PC-9 (cell line): ENCODE measurements at regions of chr1 and their contacts with region 1.

Region 1: GRCh38 chr1:30801771-30802198 is 44.2 kb upstream of the LAPTM5 start:
- DNase-seq: peak in 1 of 2 experiments; percentile 79
- H3K4me3 ChIP-seq: no peak overlapping the region
- H3K27ac ChIP-seq: no peak overlapping the region
- H3K4me1 ChIP-seq: peaks cover 25% of the 10 kb centered on the region
- H3K27me3 ChIP-seq: peaks cover 6% of the 10 kb centered on the region; the same call in 1 of the 2 replicates
- CTCF ChIP-seq: peak; percentile 88

Region 2: GRCh38 chr1:30911046-30911954 is 109.5 kb after region 1 on chr1:
- CTCF ChIA-PET with region 1: interaction called, 31 read pairs
- POLR2A ChIA-PET with region 1: interaction called, 9 read pairs
- intact Hi-C with region 1: loop called (anchors 1 kb)
- DNase-seq: peak; percentile 41 to 74
- H3K4me3 ChIP-seq: no peak overlapping the region
- H3K27ac ChIP-seq: no peak overlapping the region
- H3K4me1 ChIP-seq: peaks cover 17% of the 10 kb centered on the region
- H3K27me3 ChIP-seq: no peaks in the 10 kb centered on the region
- CTCF ChIP-seq: peak; percentile 82

Region 3: DNA sequence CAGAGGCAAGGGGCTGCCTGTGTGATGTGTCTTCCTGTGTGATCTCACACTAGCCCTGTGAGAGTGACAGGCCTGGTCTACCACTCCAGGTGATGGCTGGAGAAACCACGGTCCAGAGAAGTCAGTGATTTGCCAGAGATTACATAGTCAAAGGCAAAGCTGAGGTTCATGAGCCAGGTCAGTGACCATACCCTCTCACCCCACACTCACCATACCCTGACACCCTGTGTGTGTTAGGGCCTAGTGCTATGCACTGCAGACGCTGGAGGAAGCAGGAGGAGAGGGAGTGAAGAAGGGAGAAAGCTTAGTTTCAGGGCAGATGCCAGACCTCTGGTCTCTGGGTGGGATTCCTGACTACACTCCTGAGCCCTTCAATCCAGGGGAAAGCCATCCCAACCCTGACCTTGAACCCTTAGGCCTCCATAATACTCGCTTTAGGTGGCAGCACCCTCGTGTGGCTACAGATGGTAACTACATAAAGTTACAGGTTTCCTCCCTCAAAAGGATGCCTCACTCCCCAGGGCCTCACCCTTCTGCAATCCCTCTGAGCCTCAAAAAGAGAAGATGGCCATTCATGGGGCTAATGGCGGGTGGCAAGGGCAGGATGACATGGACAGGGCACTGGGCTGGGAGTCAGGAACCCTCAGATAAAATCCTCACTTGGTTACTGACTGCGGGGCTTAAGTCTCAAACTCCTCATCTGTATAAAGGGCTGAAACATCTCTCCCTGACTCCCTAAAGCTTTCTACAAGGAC is 127.5 kb after region 1 on chr1:
- CTCF ChIA-PET with region 1: interaction called, 3 read pairs
- POLR2A ChIA-PET with region 1: no interaction called
- intact Hi-C with region 1: loop called (anchors 5 kb)
- DNase-seq: peak in 1 of 2 experiments; percentile 37
- H3K4me3 ChIP-seq: no peak overlapping the region
- H3K27ac ChIP-seq: no peak overlapping the region
- H3K4me1 ChIP-seq: no peaks in the 10 kb centered on the region
- H3K27me3 ChIP-seq: no peaks in the 10 kb centered on the region
- CTCF ChIP-seq: peak; percentile 82